Activated CD4-positive, alpha-beta T cell treated with anti-CD3 and anti-CD28 coated beads, Interleukin-2, amount 10 ng/mL, durations not matched to agents 7 days and 5 days (primary cell): ENCODE measurements at regions of chr3 and their contacts with region 1.

Region 1: DNA sequence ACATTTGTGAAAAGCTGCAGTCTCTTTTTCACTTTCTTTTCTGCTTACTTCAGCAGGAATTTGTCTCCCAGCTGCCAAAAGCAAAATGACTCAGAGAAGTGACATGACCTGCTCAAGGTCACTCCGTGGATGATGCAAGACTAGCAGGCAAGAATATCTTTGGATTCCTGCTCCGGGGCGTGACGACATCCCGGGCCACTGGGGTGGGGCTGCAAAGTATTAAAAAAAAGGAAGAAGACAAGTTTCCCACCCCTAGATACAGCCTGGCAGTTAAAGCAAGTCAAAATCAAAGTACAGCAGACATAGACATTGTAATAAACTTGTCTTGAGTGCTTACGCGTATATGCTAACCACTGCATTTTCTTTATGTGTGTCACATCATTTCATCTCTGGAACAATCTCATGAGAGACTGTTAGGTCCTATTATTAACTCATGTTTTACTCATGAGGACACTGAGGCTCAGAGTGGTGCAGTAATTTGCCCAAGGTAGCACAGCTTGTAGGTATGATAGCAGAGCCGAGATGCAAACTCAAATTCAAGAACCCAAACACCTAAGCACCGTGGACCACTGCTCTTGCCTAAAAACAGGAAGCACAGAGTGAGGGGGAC is 485.2 kb upstream of the PROK2 start:
- DNase-seq: no peak
- H3K4me3 Mint-ChIP-seq: no peak overlapping the region
- H3K27ac Mint-ChIP-seq: peak overlapping the region; percentile 55
- H3K4me1 Mint-ChIP-seq: peaks cover 75% of the 10 kb centered on the region
- H3K27me3 Mint-ChIP-seq: no peaks in the 10 kb centered on the region

Region 2: GRCh38 chr3:72258361-72259141 is 11.6 kb before region 1 on chr3:
- CTCF ChIA-PET with region 1: interaction called, 10 read pairs
- POLR2A ChIA-PET with region 1: no interaction called
- DNase-seq: no peak
- H3K4me3 Mint-ChIP-seq: no peak overlapping the region
- H3K27ac Mint-ChIP-seq: peak overlapping the region; percentile 84
- H3K4me1 Mint-ChIP-seq: peaks cover 41% of the 10 kb centered on the region
- H3K27me3 Mint-ChIP-seq: no peaks in the 10 kb centered on the region

Region 3: GRCh38 chr3:72323773-72324172 is 53.6 kb after region 1 on chr3:
- CTCF ChIA-PET with region 1: no interaction called
- POLR2A ChIA-PET with region 1: no interaction called
- DNase-seq: no peak
- H3K4me3 Mint-ChIP-seq: no peak overlapping the region
- H3K27ac Mint-ChIP-seq: no peak overlapping the region
- H3K4me1 Mint-ChIP-seq: no peaks in the 10 kb centered on the region
- H3K27me3 Mint-ChIP-seq: peaks cover 2% of the 10 kb centered on the region